ENCODE measurements at regions of chr11 and their contacts with region 1.

Region 1: DNA sequence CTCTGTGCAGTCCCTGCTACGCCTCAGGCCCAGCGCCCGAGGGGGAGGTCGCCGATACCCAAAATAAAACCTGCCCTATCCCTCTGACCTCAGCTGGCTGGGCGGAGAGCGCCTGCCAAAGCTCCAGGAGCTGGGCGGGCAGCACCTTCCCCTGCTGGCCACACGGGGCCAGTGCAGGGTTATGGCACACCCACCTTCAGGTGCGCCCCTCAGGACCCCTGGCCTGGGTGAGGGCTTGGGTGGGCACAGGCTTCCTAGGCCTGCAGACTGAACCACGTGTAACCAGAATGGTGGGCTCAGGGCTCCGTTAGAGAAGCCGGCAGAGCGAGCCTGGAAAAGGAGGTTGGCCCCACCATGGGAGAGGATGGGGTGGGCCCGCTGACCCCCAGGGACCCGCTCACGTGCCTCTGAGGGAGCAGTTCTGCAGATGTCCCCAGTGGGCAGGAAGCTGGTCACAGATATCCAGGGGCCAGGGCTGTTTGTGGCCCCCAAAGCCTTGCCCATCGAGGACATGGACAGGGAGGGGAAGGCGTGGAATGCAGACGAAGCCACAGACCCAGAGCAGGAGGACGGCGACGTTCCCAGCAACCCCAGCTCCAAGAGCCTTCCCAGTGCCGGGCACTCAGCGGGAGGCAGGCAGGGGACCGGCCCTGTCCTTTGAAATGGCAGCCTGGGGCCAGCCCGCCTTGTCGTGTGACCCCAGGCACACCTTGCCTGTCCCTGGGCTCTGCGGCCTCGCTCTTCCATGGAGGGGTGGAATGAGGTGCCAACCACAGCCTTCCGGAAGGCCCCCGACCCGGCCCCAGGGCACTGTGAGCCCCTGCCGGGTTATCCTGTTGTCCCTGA is 1.6 kb upstream of the TNNT3 start:
- DNase-seq: no peak
- ATAC-seq: no peak
- H3K4me3 Mint-ChIP-seq: no peak overlapping the region
- H3K27ac Mint-ChIP-seq: no peak overlapping the region
- H3K4me1 Mint-ChIP-seq: peaks cover 12% of the 10 kb centered on the region
- H3K27me3 Mint-ChIP-seq: peaks cover 4% of the 10 kb centered on the region

Region 2: DNA sequence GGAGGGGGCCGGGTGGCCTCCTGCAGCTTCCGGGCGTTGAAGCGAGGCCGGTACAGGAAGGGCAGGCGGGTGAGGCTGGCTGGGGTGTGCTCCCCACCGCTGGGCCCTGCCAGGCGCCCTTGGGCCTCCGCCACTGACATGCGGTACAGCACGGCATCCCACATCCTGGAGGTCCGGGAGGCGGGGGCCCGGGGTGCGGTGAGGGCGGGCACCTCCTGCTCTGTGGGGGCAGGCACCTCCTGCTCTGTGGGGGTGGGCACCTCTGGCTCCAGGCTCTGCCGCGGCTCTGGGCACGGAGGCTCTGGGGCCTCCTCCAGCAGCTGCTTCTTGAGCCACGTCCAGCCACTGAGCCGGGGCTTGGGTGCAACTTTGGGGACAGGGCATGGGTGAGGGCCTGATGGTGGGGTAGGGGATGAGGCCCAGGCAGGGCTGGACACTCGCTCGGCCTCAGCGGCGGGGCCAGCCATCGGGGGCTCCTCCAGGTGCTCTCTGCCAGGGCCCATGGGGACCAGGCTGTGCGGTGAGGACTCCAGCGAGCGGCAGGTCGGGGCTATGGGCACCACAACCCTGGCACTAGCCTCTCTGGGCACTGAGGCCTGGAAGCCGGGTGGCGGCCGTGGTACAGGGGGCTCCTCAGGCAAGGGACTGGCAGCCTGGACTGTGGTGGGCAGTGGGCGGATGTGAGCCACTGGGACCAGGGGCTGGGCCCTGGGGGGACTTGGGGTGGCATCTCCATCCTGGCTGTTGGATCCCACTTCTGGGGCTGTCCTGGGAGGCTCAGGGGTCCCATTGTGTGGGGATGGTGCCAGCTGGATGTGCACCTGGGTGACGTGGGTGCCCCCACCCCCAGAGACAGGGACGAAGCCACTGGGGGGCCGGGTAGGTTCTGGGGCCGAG is 28.4 kb before region 1 on chr11:
- CTCF ChIA-PET with region 1: interaction called, 23 read pairs
- DNase-seq: peak; percentile 90
- ATAC-seq: peak; percentile 81
- H3K4me3 Mint-ChIP-seq: peak overlapping the region; percentile 15
- H3K27ac Mint-ChIP-seq: peak overlapping the region; percentile 88
- H3K4me1 Mint-ChIP-seq: peaks cover 31% of the 10 kb centered on the region
- H3K27me3 Mint-ChIP-seq: no peaks in the 10 kb centered on the region